GM12878 (cell line): ENCODE measurements at regions of chr4 and their contacts with region 1.

Region 1: GRCh38 chr4:128517739-128518510 is 230.3 kb upstream of the PGRMC2 start:
- DNase-seq: peak; percentile 94
- ATAC-seq: peak; percentile 98
- H3K4me3 ChIP-seq: no peak overlapping the region
- H3K27ac ChIP-seq: peak overlapping the region; percentile 66
- H3K4me1 ChIP-seq: peaks cover 23% of the 10 kb centered on the region
- H3K27me3 ChIP-seq: no peaks in the 10 kb centered on the region
- CTCF ChIP-seq: no peak
- EP300 ChIP-seq: peak; percentile 72 to 93; a peak in 3 of 4 replicates
- POLR2A ChIP-seq: no peak
- RAD21 ChIP-seq: no peak

Region 2: GRCh38 chr4:128461291-128462102 is 56.4 kb before region 1 on chr4:
- CTCF ChIA-PET with region 1: interaction called, 4 read pairs
- POLR2A ChIA-PET with region 1: no interaction called
- RAD21 ChIA-PET with region 1: interaction called, 47 read pairs
- SMC1A ChIA-PET with region 1: interaction called, 27 read pairs
- in situ Hi-C with region 1: no loop called
- intact Hi-C with region 1: no loop called
- DNase-seq: no peak
- ATAC-seq: peak; percentile 88
- H3K4me3 ChIP-seq: no peak overlapping the region
- H3K27ac ChIP-seq: no peak overlapping the region
- H3K4me1 ChIP-seq: no peaks in the 10 kb centered on the region
- H3K27me3 ChIP-seq: no peaks in the 10 kb centered on the region
- CTCF ChIP-seq: no peak
- EP300 ChIP-seq: no peak
- POLR2A ChIP-seq: no peak
- RAD21 ChIP-seq: no peak

Region 3: DNA sequence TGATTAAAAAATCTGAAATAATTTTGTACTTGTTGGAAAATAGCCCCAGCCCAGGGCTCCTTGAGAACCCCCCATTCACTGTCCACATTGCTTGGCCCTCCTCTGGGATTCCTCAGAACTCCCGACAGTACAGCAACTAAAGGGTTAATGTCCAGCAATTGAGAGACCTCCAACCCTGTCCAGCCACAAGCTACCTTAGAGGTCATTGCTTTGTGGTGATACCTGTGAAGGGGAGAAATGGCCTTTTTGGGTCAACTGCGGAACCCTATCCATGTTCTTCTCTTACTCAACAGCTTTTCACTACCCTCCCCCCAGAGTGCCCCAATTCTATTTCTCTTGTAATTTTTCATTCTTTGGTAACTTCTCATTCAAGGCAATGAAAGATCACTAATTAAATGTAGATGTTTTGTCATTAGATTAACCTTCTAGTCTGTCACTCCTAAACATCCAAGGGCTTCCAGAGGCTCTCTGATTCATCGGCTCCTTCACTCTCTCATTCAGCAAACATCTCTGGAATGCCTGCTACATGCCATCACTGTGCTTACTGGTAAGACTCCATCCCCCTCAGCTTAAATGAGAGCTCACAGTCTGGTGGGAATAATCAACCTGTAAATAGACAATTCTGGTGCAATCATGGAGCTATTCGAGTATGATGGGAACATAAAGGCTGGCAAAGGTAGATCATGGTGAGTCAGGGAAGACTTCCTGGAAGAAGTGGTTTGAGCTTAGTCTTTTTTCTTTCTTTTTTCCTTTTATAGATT is 11.0 kb after region 1 on chr4:
- CTCF ChIA-PET with region 1: interaction called, 5 read pairs
- POLR2A ChIA-PET with region 1: interaction called, 10 read pairs
- RAD21 ChIA-PET with region 1: interaction called, 5 read pairs
- SMC1A ChIA-PET with region 1: interaction called, 16 read pairs
- in situ Hi-C with region 1: no loop called
- intact Hi-C with region 1: no loop called
- DNase-seq: no peak
- ATAC-seq: no peak
- H3K4me3 ChIP-seq: no peak overlapping the region
- H3K27ac ChIP-seq: no peak overlapping the region
- H3K4me1 ChIP-seq: no peaks in the 10 kb centered on the region
- H3K27me3 ChIP-seq: no peaks in the 10 kb centered on the region
- CTCF ChIP-seq: no peak
- EP300 ChIP-seq: no peak
- POLR2A ChIP-seq: no peak
- RAD21 ChIP-seq: no peak